A673 (cell line): ENCODE measurements at regions of chr4 and their contacts with region 1.

Region 1: GRCh38 chr4:32776435-32777203 is 2056.4 kb downstream of the PCDH7 start:
- DNase-seq: no peak
- H3K4me3 ChIP-seq: no peak overlapping the region
- H3K27ac ChIP-seq: no peak overlapping the region
- H3K4me1 ChIP-seq: peaks cover 5% of the 10 kb centered on the region
- H3K27me3 ChIP-seq: no peaks in the 10 kb centered on the region
- CTCF ChIP-seq: no peak

Region 2: DNA sequence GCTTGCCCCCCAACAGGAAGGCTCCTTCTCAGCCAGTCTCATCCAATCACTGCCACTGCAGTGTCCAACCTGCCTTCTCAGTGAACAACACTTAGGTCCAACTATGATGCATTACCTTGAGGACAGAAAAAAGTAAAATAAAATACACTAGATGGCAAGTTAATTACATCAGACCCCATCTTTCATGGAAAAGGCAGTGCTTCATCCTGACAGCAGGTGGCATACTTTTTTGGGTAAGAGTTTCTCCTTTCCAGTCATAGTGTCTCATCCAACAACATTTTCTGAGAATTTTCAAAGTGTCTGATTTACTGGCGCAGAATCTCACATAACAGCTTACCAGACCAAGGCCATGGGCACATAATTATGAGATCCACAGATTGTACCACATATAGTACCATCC is 313.7 kb before region 1 on chr4:
- CTCF ChIA-PET with region 1: no interaction called
- POLR2A ChIA-PET with region 1: no interaction called
- intact Hi-C with region 1: loop called (anchors 2 kb)
- DNase-seq: peak; percentile 50
- H3K4me3 ChIP-seq: no peak overlapping the region
- H3K27ac ChIP-seq: no peak overlapping the region
- H3K4me1 ChIP-seq: no peaks in the 10 kb centered on the region
- H3K27me3 ChIP-seq: no peaks in the 10 kb centered on the region
- CTCF ChIP-seq: peak; percentile 64

Region 3: DNA sequence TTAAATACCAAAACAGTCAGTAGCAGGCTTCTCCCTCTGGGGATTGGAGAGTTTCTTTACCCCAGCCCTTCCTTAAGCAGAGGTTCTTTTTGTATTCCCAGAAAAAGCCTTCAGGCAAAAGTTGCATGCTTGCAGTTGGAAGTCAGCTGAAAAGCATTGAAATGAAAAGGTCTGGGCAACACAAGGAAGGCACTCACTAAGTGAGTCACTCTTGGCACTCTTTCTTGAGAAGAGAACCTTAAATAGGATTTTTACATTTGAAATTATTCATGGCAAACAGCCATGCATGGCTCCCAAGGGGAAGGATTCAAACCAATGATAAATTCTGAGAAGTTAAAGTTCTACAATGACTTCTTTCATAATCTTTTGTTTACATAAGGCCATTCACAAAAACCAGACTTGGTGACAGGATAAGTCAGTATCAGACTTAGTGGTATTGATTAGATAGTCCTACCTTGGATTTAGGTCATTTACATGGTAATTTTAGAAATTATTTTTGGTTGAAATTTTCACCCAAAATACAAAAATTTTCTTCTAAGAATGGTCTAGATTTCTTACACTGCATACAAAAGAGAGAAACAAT is 12.5 kb after region 1 on chr4:
- CTCF ChIA-PET with region 1: no interaction called
- POLR2A ChIA-PET with region 1: no interaction called
- intact Hi-C with region 1: no loop called
- DNase-seq: peak; percentile 76
- H3K4me3 ChIP-seq: no peak overlapping the region
- H3K27ac ChIP-seq: no peak overlapping the region
- H3K4me1 ChIP-seq: no peaks in the 10 kb centered on the region
- H3K27me3 ChIP-seq: no peaks in the 10 kb centered on the region
- CTCF ChIP-seq: no peak